Mammary epithelial cell (primary cell): ENCODE measurements at regions of chr11 and their contacts with region 1.

Region 1: GRCh38 chr11:22670830-22671229 is 4.4 kb downstream of the GAS2 start:
- DNase-seq: peak; percentile 19
- H3K4me3 ChIP-seq: no peak overlapping the region
- H3K27ac ChIP-seq: no peak overlapping the region
- H3K4me1 ChIP-seq: no peaks in the 10 kb centered on the region
- H3K27me3 ChIP-seq: peaks cover 19% of the 10 kb centered on the region
- CTCF ChIP-seq: peak; percentile 34 to 57

Region 2: DNA sequence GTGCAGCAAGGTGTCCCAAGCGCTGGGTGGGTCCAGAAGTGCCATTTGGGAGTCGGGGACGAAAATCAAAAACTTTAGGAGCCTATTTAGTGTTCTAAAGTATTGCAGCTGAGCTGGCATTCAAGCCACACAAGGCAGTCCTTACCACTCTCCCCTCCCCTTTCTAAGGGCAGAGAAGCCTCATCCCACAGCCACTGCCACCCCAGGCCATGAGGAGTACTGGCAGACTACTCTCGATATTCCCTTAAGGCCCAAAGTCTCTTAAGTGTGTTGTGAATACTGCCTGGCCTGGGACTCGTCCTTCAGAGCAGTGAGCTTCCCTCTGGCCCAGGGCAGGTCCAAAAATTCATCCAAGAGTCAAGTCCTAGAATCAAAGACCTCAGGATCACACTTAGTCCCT is 53.0 kb before region 1 on chr11:
- CTCF ChIA-PET with region 1: no interaction called
- dilution Hi-C with region 1: no loop called
- in situ Hi-C with region 1: no loop called
- intact Hi-C with region 1: no loop called
- DNase-seq: no peak
- H3K4me3 ChIP-seq: no peak overlapping the region
- H3K27ac ChIP-seq: no peak overlapping the region
- H3K4me1 ChIP-seq: no peaks in the 10 kb centered on the region
- H3K27me3 ChIP-seq: no peaks in the 10 kb centered on the region
- CTCF ChIP-seq: no peak

Region 3: DNA sequence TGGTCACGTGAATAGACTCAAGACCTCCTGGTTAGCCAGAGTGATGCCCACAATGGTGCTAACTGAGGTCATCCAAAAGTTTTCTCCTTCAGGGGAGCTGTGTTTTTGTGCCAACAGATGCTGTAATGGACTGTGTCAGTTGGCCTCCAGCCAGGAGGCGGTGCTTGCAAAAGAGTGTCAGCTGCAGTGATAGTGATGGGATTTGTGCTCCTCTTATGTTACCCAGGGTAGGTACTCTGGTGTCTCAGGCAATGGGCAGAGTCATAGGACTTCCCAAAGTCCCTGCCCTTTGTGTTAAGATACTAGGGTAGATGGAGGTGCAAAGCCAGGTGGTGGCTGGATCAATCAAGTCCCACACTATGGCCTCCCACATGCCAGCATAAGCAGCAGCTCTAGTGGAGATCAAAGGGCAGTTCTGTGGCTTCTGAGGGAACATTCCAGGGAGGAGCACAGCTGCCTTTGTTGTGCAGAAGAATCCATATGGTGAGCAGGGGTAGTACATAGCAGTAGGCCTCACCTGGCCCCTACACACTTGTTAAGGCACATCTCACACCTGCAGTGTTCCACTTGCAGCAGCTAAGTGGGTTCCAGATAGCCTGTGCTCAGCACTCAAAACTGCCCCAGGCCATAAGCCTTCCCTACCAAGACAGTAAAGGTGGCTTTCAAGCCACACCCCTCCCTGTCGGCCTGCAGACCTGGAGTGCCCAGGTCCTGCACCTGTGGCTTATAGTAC is 35.8 kb before region 1 on chr11:
- CTCF ChIA-PET with region 1: no interaction called
- dilution Hi-C with region 1: no loop called
- in situ Hi-C with region 1: no loop called
- intact Hi-C with region 1: no loop called
- DNase-seq: peak; percentile 29
- H3K4me3 ChIP-seq: no peak overlapping the region
- H3K27ac ChIP-seq: no peak overlapping the region
- H3K4me1 ChIP-seq: peaks cover 7% of the 10 kb centered on the region
- H3K27me3 ChIP-seq: no peaks in the 10 kb centered on the region
- CTCF ChIP-seq: no peak

Region 4: DNA sequence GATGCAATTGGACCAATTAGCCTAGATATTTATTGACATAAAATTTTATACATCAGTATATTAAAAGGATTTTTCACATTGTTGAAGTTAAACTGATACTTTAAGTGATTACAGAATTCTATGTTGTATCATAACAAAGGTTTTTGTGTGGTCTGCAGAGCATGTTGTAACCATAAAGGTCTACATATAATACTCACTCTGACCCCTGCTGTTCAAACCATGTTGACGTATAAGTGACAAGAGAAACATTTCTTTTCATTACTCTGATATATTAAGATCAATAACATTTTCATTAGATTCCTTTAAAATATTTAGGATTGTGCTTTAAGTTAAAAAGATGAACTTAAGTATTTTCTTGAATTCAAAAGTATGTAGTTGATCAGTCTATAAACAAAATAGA is 59.5 kb after region 1 on chr11:
- CTCF ChIA-PET with region 1: no interaction called
- dilution Hi-C with region 1: no loop called
- in situ Hi-C with region 1: no loop called
- intact Hi-C with region 1: loop called (anchors 1 kb)
- DNase-seq: no peak
- H3K4me3 ChIP-seq: no peak overlapping the region
- H3K27ac ChIP-seq: no peak overlapping the region
- H3K4me1 ChIP-seq: no peaks in the 10 kb centered on the region
- H3K27me3 ChIP-seq: no peaks in the 10 kb centered on the region
- CTCF ChIP-seq: peak in 1 of 2 donors; percentile 40